Naive thymus-derived CD4-positive, alpha-beta T cell (primary cell): ENCODE measurements at regions of chr20 and their contacts with region 1.

Region 1: DNA sequence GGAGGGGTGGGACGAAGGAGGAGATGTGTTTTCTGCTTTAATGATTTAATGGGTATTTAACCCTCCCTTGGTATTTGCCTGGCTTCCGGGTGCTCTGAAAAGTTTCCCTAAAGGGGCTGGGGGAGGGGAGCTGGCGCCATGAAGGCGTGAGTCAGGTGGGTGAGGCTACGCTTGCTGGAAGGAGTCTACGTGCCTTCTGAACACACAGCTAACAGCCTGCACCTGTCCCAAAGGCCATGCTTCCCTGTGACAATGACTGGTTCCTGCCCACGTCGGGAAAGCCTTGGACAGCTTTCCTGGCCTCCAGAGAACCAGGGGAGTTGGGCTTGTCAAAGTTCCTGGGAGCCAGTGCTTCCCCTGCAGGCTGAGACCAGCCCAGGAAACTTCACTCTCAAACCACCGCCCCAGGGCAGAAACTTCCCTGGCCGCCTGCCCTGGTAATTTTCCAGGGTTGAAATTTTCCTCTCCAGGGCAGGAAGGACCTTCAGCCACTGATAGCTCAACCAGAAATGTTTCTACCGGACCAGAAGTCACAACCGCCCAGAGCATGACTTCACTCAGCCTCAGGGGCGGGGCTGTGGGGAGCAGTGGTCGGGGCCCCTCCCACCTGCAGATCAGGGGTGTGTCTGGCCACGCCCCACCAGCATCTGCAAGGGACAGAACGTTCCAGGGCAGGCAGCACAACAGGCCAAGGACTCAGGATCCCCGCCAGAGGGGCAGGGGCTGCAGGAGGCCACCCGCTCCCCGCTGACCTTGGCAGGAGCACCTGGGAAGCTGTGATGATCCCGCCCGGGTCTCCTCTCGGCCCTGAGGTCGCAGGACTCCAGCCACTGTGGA is 18.6 kb upstream of the SLCO4A1 start:
- DNase-seq: peak; percentile 31 to 85 (median 58)
- ATAC-seq: peak; percentile 96
- H3K4me3 ChIP-seq: peak overlapping the region; percentile 39
- H3K4me3 Mint-ChIP-seq: peak overlapping the region; percentile 41 to 85 (median 75)
- H3K27ac ChIP-seq: no peak overlapping the region
- H3K27ac Mint-ChIP-seq: peak overlapping the region; percentile 28 to 98 (median 72)
- H3K4me1 ChIP-seq: peaks cover 12 to 21% of the 10 kb centered on the region in 2 donors
- H3K4me1 Mint-ChIP-seq: peaks cover 11 to 38% (median 13%) of the 10 kb centered on the region in 7 donors
- H3K27me3 ChIP-seq: no peaks in the 10 kb centered on the region
- H3K27me3 Mint-ChIP-seq: no peaks in the 10 kb centered on the region

Region 2: GRCh38 chr20:62636446-62636845 is 12.7 kb after region 1 on chr20:
- CTCF ChIA-PET with region 1: no interaction called
- POLR2A ChIA-PET with region 1: no interaction called
- intact Hi-C with region 1: no loop called
- DNase-seq: no peak
- ATAC-seq: peak; percentile 34
- H3K4me3 ChIP-seq: no peak overlapping the region
- H3K4me3 Mint-ChIP-seq: peak overlapping the region in 1 of 10 donors; percentile 9
- H3K27ac ChIP-seq: no peak overlapping the region
- H3K27ac Mint-ChIP-seq: no peak overlapping the region
- H3K4me1 ChIP-seq: peaks cover 0 to 2% of the 10 kb centered on the region in 2 donors
- H3K4me1 Mint-ChIP-seq: peaks cover 4 to 23% (median 7%) of the 10 kb centered on the region in 7 donors
- H3K27me3 ChIP-seq: no peaks in the 10 kb centered on the region
- H3K27me3 Mint-ChIP-seq: peaks cover 5 to 37% (median 16%) of the 10 kb centered on the region in 5 donors

Region 3: GRCh38 chr20:62652051-62652926 is 28.6 kb after region 1 on chr20:
- CTCF ChIA-PET with region 1: no interaction called
- POLR2A ChIA-PET with region 1: no interaction called
- intact Hi-C with region 1: loop called (anchors 1 kb)
- DNase-seq: peak; percentile 44 to 80 (median 75)
- ATAC-seq: peak; percentile 78
- H3K4me3 ChIP-seq: peak overlapping the region; percentile 40
- H3K4me3 Mint-ChIP-seq: peak overlapping the region; percentile 80 to 95 (median 84)
- H3K27ac ChIP-seq: peak overlapping the region; percentile 81
- H3K27ac Mint-ChIP-seq: peak overlapping the region; percentile 93 to 99 (median 97)
- H3K4me1 ChIP-seq: peaks cover 17 to 20% of the 10 kb centered on the region in 2 donors
- H3K4me1 Mint-ChIP-seq: peaks cover 11 to 45% (median 30%) of the 10 kb centered on the region in 7 donors
- H3K27me3 ChIP-seq: no peaks in the 10 kb centered on the region
- H3K27me3 Mint-ChIP-seq: no peaks in the 10 kb centered on the region